Endothelial cell of umbilical vein (primary cell): ENCODE measurements at regions of chr4 and their contacts with region 1.

Region 1: GRCh38 chr4:88533937-88534750 is 10.6 kb upstream of the PYURF start:
- DNase-seq: peak; percentile 83
- H3K4me3 ChIP-seq: peak overlapping the region in 1 of 3 experiments; percentile 35
- H3K27ac ChIP-seq: peak overlapping the region; percentile 98
- H3K4me1 ChIP-seq: peaks cover 38% of the 10 kb centered on the region
- H3K27me3 ChIP-seq: no peaks in the 10 kb centered on the region
- CTCF ChIP-seq: no peak
- POLR2A ChIP-seq: no peak

Region 2: DNA sequence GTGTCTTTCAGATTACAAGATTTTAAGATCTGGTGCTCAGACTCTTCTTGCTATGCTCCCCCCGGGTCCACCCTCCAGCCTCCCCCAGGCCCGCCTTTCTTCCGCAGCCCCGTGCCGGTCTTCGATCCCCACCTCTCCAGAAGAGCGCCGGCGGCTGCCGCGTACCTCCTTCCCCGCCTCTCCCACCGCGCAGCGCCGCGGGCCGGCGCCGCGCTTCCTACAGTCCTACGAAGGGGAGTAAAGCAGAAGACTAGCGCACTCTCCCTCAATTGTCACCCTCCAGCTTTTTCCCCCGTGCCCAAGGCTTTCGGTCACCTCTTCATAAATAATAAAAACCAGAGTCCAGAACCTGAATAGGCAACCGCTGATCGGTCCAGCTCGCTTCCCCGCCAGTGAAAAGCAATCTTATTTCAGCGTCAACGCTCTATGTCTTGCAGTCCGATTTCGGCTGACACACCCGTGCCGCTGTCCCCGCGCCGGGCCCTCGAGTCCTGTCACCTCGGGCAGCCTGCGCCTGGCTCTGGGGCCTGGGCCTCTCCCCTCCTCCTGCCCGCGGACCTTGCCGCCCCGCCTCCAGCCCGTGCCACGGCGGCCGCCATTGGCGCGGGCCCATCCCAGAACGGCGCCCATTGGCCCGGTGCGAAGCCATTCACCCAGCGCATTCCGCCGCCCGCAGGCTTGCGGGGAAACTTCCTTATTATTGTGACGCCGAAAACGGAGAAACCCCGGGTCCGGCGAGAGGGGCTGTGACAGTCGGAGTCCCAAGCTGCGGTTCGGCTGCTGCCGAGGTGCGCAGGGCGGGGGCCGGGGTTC is 57.8 kb after region 1 on chr4 and contains the start of gene HERC3:
- CTCF ChIA-PET with region 1: interaction called, 18 read pairs
- POLR2A ChIA-PET with region 1: no interaction called
- dilution Hi-C with region 1: no loop called
- intact Hi-C with region 1: loop called (anchors 1 kb)
- DNase-seq: peak; percentile 93
- H3K4me3 ChIP-seq: peak within 1 kb of the TSS; percentile 60 to 81 (median 80)
- H3K27ac ChIP-seq: peak within 1 kb of the TSS; percentile 56
- H3K4me1 ChIP-seq: peaks cover 9% of the 10 kb centered on the region
- H3K27me3 ChIP-seq: no peaks in the 10 kb centered on the region
- CTCF ChIP-seq: peak in 1 of 2 donors; percentile 12
- POLR2A ChIP-seq: no peak
- total RNA-seq, gene HERC3: 21.2 and 25.6 TPM in 2 replicates

Region 3: DNA sequence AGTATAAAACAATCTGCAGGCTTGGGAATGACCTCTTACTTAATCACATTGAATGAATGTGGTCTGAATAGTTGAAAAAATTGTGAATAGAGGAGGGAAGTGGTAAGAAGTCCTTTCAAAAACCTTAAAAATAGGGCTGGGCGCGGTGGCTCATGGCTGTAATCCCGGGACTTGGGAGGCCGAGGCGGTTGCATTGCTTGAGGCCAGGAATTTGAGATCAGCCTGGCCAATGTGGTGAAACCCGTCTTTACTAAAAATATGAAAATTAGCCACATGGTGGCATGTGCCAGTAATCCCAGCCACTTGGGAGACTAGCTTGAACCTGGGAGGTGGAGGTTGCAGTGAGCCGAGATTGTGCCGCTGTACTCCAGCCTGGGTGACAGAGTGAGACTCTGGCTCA is 94.6 kb after region 1 on chr4:
- CTCF ChIA-PET with region 1: interaction called, 12 read pairs
- POLR2A ChIA-PET with region 1: no interaction called
- dilution Hi-C with region 1: no loop called
- intact Hi-C with region 1: no loop called
- DNase-seq: no peak
- H3K4me3 ChIP-seq: no peak overlapping the region
- H3K27ac ChIP-seq: no peak overlapping the region
- H3K4me1 ChIP-seq: peaks cover 13% of the 10 kb centered on the region
- H3K27me3 ChIP-seq: no peaks in the 10 kb centered on the region
- CTCF ChIP-seq: no peak
- POLR2A ChIP-seq: no peak

Region 4: DNA sequence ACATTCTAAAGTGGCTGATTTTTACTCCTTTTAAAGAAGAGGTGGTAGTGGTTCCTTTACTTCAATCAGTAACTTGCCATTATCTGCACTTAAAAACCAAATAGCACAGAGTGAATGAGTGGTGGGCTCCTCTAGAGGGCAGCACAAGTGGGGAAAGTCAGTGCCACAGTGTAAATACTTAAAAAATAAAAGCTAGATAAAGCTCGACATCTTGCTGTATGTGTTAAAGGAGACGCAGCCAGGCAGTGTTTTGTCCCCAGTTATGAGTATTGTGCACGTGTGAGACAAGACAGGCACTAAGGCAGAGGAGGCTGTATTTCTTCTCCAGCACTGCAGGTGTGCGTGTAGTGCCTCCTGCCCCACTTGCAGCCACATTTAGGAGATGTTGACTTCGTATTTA is 138.8 kb after region 1 on chr4:
- CTCF ChIA-PET with region 1: interaction called, 26 read pairs
- POLR2A ChIA-PET with region 1: no interaction called
- dilution Hi-C with region 1: no loop called
- intact Hi-C with region 1: no loop called
- DNase-seq: peak; percentile 65
- H3K4me3 ChIP-seq: no peak overlapping the region
- H3K27ac ChIP-seq: no peak overlapping the region
- H3K4me1 ChIP-seq: no peaks in the 10 kb centered on the region
- H3K27me3 ChIP-seq: no peaks in the 10 kb centered on the region
- CTCF ChIP-seq: peak; percentile 56 to 74
- POLR2A ChIP-seq: no peak

Region 5: DNA sequence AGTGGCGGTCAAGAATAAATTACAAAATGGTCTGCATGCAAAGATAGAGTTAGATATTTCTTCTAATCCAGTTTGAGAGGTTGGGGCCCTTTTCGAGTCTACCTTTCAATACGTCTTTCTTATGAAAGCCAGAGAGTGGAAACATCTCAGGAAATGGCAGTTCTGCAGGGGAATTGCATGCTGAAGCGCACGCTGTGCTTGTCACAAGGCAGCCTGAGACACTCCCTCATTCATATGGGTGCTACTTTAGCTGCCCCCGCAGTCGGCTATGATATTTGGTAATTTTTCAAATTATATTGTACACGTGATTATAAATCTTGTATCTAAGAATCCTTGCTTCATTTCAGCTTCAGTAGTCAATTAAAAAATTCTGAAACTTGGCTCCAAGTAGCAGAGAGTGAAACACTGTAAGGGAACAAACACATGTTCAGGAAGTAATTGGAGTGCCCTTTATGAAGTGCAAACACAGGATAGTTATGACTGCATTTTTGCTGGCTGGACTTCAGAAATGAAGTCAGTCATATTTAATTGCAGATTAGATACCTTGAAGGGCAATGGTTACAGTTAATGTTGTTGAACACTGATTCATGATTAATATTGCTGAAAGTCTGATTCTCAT is 309.0 kb after region 1 on chr4:
- CTCF ChIA-PET with region 1: no interaction called
- POLR2A ChIA-PET with region 1: no interaction called
- dilution Hi-C with region 1: no loop called
- intact Hi-C with region 1: no loop called
- DNase-seq: peak; percentile 87
- H3K4me3 ChIP-seq: no peak overlapping the region
- H3K27ac ChIP-seq: no peak overlapping the region
- H3K4me1 ChIP-seq: peaks cover 11% of the 10 kb centered on the region
- H3K27me3 ChIP-seq: peaks cover 0 to 3% of the 10 kb centered on the region in 2 experiments
- CTCF ChIP-seq: no peak
- POLR2A ChIP-seq: no peak

Region 6: DNA sequence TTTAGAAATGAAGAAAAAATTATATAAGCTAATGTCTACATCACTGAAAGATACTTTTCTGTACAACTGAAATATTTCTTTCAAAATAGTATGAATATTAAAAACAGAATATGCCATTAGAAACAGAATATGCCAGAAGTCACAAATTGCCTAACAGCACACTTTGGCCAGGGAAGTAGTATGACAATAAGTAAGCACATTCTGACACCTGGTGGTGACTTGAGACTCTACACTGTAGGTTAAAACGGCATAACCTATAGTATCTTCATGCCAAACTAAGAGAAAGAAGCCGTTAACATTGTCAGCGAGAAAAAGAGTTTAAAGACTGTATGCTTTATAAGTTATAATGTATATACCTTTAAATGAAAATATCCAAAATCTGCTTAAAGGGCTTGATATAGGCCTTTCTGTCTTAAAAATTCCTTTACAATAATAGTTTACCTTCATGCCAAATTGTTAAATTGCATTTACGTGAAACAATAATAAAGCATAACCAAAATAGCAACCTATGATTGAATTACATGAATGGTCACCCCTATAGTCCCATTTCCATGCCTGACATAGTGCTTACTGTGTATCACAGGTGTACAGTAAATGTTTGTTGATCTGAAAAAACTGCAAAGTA is 490.0 kb after region 1 on chr4:
- CTCF ChIA-PET with region 1: interaction called, 24 read pairs
- POLR2A ChIA-PET with region 1: no interaction called
- dilution Hi-C with region 1: no loop called
- intact Hi-C with region 1: loop called (anchors 1 kb)
- DNase-seq: peak; percentile 78
- H3K4me3 ChIP-seq: no peak overlapping the region
- H3K27ac ChIP-seq: no peak overlapping the region
- H3K4me1 ChIP-seq: no peaks in the 10 kb centered on the region
- H3K27me3 ChIP-seq: no peaks in the 10 kb centered on the region
- CTCF ChIP-seq: peak; percentile 48 to 58
- POLR2A ChIP-seq: no peak